GM12878 (cell line): ENCODE measurements at regions of chr2 and their contacts with region 1.

Region 1: GRCh38 chr2:112626604-112627059 is 19.1 kb upstream of the SLC20A1 start:
- DNase-seq: no peak
- ATAC-seq: peak; percentile 86
- H3K4me3 ChIP-seq: no peak overlapping the region
- H3K27ac ChIP-seq: no peak overlapping the region
- H3K4me1 ChIP-seq: peaks cover 19% of the 10 kb centered on the region
- H3K27me3 ChIP-seq: no peaks in the 10 kb centered on the region
- CTCF ChIP-seq: peak; percentile 91 to 95 (median 92)
- EP300 ChIP-seq: no peak
- POLR2A ChIP-seq: no peak
- RAD21 ChIP-seq: peak; percentile 94

Region 2: DNA sequence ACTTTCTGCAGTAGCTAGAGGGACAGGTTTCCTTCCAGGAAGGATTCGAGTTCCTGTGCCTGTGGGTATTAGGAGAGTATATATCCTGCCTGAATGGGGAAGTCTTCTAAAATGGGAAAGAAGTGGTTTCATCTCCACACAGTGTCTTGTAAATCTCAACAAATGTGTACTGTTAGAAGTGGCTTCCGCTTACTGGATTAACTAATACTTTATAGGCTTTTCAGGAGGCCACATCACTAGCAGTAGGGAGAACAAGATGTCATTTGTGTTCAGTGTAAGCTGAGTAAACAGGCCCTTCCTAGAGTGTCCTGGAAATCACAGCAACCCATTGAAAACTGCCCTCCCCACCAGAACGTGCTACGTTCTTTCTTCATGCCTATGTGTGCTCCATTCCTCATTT is 96.9 kb before region 1 on chr2:
- CTCF ChIA-PET with region 1: no interaction called
- POLR2A ChIA-PET with region 1: no interaction called
- RAD21 ChIA-PET with region 1: no interaction called
- SMC1A ChIA-PET with region 1: no interaction called
- in situ Hi-C with region 1: no loop called
- intact Hi-C with region 1: no loop called
- DNase-seq: no peak
- ATAC-seq: no peak
- H3K4me3 ChIP-seq: no peak overlapping the region
- H3K27ac ChIP-seq: no peak overlapping the region
- H3K4me1 ChIP-seq: no peaks in the 10 kb centered on the region
- H3K27me3 ChIP-seq: no peaks in the 10 kb centered on the region
- CTCF ChIP-seq: no peak
- EP300 ChIP-seq: no peak
- POLR2A ChIP-seq: no peak
- RAD21 ChIP-seq: no peak

Region 3: GRCh38 chr2:112606488-112606902 is 20.1 kb before region 1 on chr2:
- CTCF ChIA-PET with region 1: interaction called, 35 read pairs
- POLR2A ChIA-PET with region 1: interaction called, 3 read pairs
- RAD21 ChIA-PET with region 1: interaction called, 57 read pairs
- SMC1A ChIA-PET with region 1: interaction called, 85 read pairs
- in situ Hi-C with region 1: no loop called
- intact Hi-C with region 1: no loop called
- DNase-seq: no peak
- ATAC-seq: peak; percentile 20; the same call in 1 of the 3 replicates
- H3K4me3 ChIP-seq: no peak overlapping the region
- H3K27ac ChIP-seq: no peak overlapping the region
- H3K4me1 ChIP-seq: no peaks in the 10 kb centered on the region
- H3K27me3 ChIP-seq: no peaks in the 10 kb centered on the region
- CTCF ChIP-seq: no peak
- EP300 ChIP-seq: no peak
- POLR2A ChIP-seq: no peak
- RAD21 ChIP-seq: no peak

Region 4: DNA sequence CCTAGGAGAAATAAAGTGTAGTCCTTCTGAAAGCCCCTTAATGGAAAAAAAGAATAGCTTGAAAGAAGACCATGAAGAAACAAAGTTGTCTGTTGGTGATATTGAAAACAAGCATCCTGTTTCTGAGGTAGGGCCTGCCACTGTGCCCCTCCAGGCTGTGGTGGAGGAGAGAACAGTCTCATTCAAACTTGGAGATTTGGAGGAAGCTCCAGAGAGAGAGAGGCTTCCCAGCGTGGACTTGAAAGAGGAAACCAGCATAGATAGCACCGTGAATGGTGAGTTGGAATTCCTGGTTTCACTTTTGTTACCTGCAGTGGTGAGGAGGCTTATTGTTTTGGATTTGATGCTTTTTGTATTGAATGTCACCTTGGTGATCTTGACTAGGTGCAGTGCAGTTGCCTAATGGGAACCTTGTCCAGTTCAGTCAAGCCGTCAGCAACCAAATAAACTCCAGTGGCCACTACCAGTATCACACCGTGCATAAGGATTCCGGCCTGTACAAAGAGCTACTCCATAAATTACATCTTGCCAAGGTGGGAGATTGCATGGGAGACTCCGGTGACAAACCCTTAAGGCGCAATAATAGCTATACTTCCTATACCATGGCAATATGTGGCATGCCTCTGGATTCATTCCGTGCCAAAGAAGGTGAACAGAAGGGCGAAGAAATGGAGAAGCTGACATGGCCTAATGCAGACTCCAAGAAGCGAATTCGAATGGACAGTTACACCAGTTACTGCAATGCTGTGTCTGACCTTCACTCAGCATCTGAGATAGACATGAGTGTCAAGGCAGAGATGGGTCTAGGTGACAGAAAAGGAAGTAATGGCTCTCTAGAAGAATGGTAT is 32.4 kb after region 1 on chr2:
- CTCF ChIA-PET with region 1: interaction called, 29 read pairs
- POLR2A ChIA-PET with region 1: interaction called, 10 read pairs
- RAD21 ChIA-PET with region 1: interaction called, 6 read pairs
- SMC1A ChIA-PET with region 1: interaction called, 13 read pairs
- in situ Hi-C with region 1: no loop called
- intact Hi-C with region 1: no loop called
- DNase-seq: no peak
- ATAC-seq: no peak
- H3K4me3 ChIP-seq: peak overlapping the region; percentile 6; the same call in 1 of the 2 replicates
- H3K27ac ChIP-seq: no peak overlapping the region; the same call in 1 of the 2 replicates
- H3K4me1 ChIP-seq: peaks cover 21% of the 10 kb centered on the region
- H3K27me3 ChIP-seq: no peaks in the 10 kb centered on the region
- CTCF ChIP-seq: no peak
- EP300 ChIP-seq: no peak
- POLR2A ChIP-seq: no peak; the same call in 1 of the 2 replicates
- RAD21 ChIP-seq: no peak

Region 5: DNA sequence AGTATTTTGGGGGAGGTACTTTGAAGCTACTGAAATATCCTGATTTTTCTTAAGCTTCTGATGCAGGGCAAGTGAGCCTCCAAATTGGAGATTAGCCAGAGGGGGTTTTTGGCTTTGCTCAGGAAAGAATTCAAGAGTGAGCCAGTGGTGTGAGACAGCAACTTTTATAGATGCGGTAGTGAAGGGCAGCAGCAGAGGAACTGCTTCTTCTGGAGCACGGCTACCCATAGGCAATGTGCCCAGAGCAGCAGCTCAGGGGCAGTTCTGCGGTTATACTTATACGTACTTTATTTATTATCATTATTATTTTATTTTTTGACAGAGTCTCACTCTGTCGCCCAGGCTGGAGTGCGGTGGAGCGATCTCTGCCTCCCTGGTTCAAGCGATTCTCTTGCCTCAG is 74.4 kb after region 1 on chr2:
- CTCF ChIA-PET with region 1: interaction called, 41 read pairs
- POLR2A ChIA-PET with region 1: interaction called, 13 read pairs
- RAD21 ChIA-PET with region 1: interaction called, 51 read pairs
- SMC1A ChIA-PET with region 1: interaction called, 100 read pairs
- in situ Hi-C with region 1: no loop called
- intact Hi-C with region 1: no loop called
- DNase-seq: no peak
- ATAC-seq: peak; percentile 25; the same call in 2 of the 3 replicates
- H3K4me3 ChIP-seq: no peak overlapping the region
- H3K27ac ChIP-seq: peak overlapping the region; percentile 63
- H3K4me1 ChIP-seq: peaks cover 36% of the 10 kb centered on the region
- H3K27me3 ChIP-seq: no peaks in the 10 kb centered on the region
- CTCF ChIP-seq: no peak
- EP300 ChIP-seq: no peak
- POLR2A ChIP-seq: no peak
- RAD21 ChIP-seq: no peak

Region 6: DNA sequence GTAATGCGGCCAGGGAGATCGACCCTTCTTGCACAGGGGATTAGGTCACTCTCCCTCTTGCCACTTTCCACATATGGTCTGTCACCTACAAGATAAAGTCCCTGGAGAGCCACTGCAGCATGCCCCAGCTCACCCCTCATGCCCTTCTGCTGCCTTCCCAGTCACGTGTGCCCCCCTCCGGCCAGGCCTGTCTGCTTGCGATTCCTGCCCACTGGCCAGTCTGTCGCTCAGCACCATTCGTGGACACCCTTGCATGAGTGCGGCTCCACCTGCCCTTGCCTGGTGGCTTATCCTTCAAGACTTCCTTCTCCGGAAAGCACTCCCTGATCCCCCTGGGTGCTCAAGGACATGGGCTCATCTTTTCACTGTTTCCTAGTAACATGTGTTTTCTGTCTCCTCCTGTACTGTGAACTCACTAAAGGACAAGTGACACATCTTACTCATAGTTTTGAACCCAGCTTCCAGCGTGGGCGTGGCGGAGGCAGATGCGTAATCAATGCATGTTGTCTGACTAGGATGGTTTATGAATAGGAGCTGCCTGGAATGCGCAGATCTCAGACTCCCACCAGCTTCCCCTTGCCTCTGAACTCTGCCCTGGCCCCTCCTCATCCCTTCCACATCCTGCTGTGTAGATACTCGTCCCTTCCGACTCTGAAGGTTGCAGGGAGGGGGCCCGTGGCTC is 86.4 kb after region 1 on chr2:
- CTCF ChIA-PET with region 1: interaction called, 41 read pairs
- POLR2A ChIA-PET with region 1: interaction called, 5 read pairs
- RAD21 ChIA-PET with region 1: interaction called, 44 read pairs
- SMC1A ChIA-PET with region 1: interaction called, 100 read pairs
- in situ Hi-C with region 1: no loop called
- intact Hi-C with region 1: no loop called
- DNase-seq: no peak
- ATAC-seq: no peak
- H3K4me3 ChIP-seq: no peak overlapping the region
- H3K27ac ChIP-seq: no peak overlapping the region
- H3K4me1 ChIP-seq: peaks cover 20% of the 10 kb centered on the region
- H3K27me3 ChIP-seq: no peaks in the 10 kb centered on the region
- CTCF ChIP-seq: no peak
- EP300 ChIP-seq: no peak
- POLR2A ChIP-seq: no peak
- RAD21 ChIP-seq: no peak